Heart left ventricle (tissue), 16 donors: ENCODE measurements at regions of chr3 and their contacts with region 1.

Region 1: GRCh38 chr3:113745273-113746068 is 578 bp downstream of the NAA50 start:
- DNase-seq: peak; percentile 57 to 77 (median 71)
- ATAC-seq: peak; percentile 52 to 73 (median 70)
- H3K4me3 ChIP-seq: peak overlapping the region; percentile 63 to 95 (median 85)
- H3K27ac ChIP-seq: peak overlapping the region; percentile 94 to 100 (median 98)
- H3K4me1 ChIP-seq: peaks cover 6 to 71% (median 36%) of the 10 kb centered on the region in 12 donors
- H3K27me3 ChIP-seq: no peaks in the 10 kb centered on the region
- CTCF ChIP-seq: peak; percentile 23 to 68 (median 59)
- POLR2A ChIP-seq: no peak

Region 2: GRCh38 chr3:113514265-113514769 is 231.2 kb before region 1 on chr3:
- intact Hi-C with region 1: loop called in 4 of 10 experiments (anchors 5 to 10 kb)
- DNase-seq: no peak
- ATAC-seq: peak in 2 of 4 donors; percentile 1 to 18
- H3K4me3 ChIP-seq: peak overlapping the region; percentile 53 to 98 (median 82)
- H3K27ac ChIP-seq: peak overlapping the region in 11 of 12 donors; percentile 18 to 91 (median 80)
- H3K4me1 ChIP-seq: peaks cover 0 to 19% (median 8%) of the 10 kb centered on the region in 12 donors
- H3K27me3 ChIP-seq: peaks cover 0 to 10% (median 0%) of the 10 kb centered on the region in 9 donors
- CTCF ChIP-seq: no peak
- POLR2A ChIP-seq: no peak

Region 3: DNA sequence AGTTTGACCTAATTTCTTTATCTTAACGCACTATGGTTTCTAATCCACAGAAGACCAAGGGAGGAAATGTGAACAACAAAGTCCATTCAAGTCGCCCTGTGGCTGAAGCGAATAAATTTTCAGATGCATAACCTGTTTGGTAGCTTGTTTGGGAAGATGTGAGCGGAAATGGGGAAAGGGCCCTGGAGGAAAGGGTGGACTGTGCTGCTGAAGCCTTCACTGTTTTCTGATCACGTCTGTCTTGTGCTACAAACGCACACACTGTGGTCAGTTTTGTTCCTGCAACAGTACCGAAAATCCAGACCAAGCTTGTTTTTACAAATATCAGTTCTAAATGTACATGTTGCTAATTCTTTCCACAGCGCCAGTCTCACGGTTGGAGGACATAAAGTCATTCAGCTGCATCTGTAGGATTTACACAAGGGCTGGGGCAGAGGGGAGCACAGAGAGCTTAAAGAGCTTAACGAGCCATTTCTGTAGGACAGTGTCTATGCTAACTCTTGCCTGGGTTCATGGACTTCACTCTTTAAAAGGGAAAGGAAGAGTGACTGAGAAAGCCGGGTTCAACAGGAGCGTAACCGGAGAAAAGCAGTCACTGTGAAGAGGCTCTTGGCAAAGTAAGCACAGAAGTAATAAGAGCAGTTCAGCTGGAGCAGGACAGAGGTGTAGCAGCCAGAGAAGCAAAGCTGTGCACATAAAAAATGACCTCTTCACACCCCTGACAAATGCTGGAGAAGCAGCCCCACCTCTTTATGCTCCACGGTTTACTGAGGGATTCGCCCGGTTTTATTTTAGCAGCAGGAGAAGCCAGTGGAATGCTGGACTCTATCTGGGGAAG is 115.7 kb before region 1 on chr3:
- intact Hi-C with region 1: no loop called
- DNase-seq: no peak
- ATAC-seq: no peak
- H3K4me3 ChIP-seq: no peak overlapping the region
- H3K27ac ChIP-seq: peak overlapping the region in 1 of 12 donors; percentile 32
- H3K4me1 ChIP-seq: peaks cover 0 to 18% (median 3%) of the 10 kb centered on the region in 12 donors
- H3K27me3 ChIP-seq: no peaks in the 10 kb centered on the region
- CTCF ChIP-seq: no peak
- POLR2A ChIP-seq: no peak

Region 4: DNA sequence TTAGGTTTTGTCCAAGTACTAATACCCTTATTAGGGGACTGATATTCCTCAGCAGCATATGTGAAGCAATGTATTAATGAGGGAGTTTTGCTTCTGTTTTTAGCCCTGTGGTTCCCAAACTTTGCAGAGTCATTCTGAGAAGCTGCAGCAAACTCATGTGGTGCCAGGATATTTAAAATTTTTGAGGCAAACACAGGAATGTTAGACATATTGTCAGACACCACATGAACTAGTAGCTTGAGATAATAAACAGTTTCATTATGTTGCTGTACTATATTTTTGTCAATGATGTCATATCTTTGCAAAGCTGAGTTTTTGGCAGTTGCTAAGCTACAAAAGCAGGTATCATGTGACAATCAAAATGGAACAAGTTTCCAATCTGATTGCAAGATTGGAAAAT is 38.0 kb after region 1 on chr3:
- intact Hi-C with region 1: loop called in 2 of 10 experiments (anchors 5 kb)
- DNase-seq: no peak
- ATAC-seq: peak in 1 of 4 donors; percentile 37
- H3K4me3 ChIP-seq: peak overlapping the region in 2 of 12 donors; percentile 1 to 19
- H3K27ac ChIP-seq: peak overlapping the region in 8 of 12 donors; percentile 2 to 74 (median 27)
- H3K4me1 ChIP-seq: peaks cover 0 to 36% (median 12%) of the 10 kb centered on the region in 12 donors
- H3K27me3 ChIP-seq: no peaks in the 10 kb centered on the region
- CTCF ChIP-seq: no peak
- POLR2A ChIP-seq: no peak

Region 5: GRCh38 chr3:114056130-114057010 is 310.9 kb after region 1 on chr3 and contains the starts of genes CCDC191 and QTRT2:
- intact Hi-C with region 1: loop called in 4 of 10 experiments (anchors 2 to 10 kb)
- DNase-seq: peak; percentile 98 to 99 (median 99)
- ATAC-seq: peak; percentile 99 to 100 (median 100)
- H3K4me3 ChIP-seq: peak within 1 kb of the TSS; percentile 46 to 92 (median 75)
- H3K27ac ChIP-seq: peak within 1 kb of the TSS in 11 of 12 donors; percentile 74 to 88 (median 82)
- H3K4me1 ChIP-seq: peaks cover 0 to 28% (median 15%) of the 10 kb centered on the region in 12 donors
- H3K27me3 ChIP-seq: no peaks in the 10 kb centered on the region
- CTCF ChIP-seq: peak in 1 of 12 donors; percentile 6
- POLR2A ChIP-seq: peak in 1 of 2 donors; percentile 39
- total RNA-seq, gene CCDC191: 0.38 to 3.2 (median 1.2) TPM
- total RNA-seq, gene QTRT2: 2.7 to 12.2 (median 5.7) TPM